CD8-positive, alpha-beta T cell (primary cell): ENCODE measurements at regions of chr3 and their contacts with region 1.

Region 1: GRCh38 chr3:127590593-127591477 is at the start of gene TPRA1:
- DNase-seq: peak; percentile 46 to 94 (median 79)
- ATAC-seq: peak; percentile 86
- H3K4me3 ChIP-seq: peak within 1 kb of the TSS; percentile 75 to 81
- H3K4me3 Mint-ChIP-seq: peak within 1 kb of the TSS; percentile 97
- H3K27ac ChIP-seq: peak within 1 kb of the TSS; percentile 68 to 74
- H3K27ac Mint-ChIP-seq: peak within 1 kb of the TSS; percentile 91
- H3K4me1 ChIP-seq: peaks cover 20% of the 10 kb centered on the region
- H3K4me1 Mint-ChIP-seq: peaks cover 35% of the 10 kb centered on the region
- H3K27me3 ChIP-seq: no peaks in the 10 kb centered on the region
- H3K27me3 Mint-ChIP-seq: no peaks in the 10 kb centered on the region
- CTCF ChIP-seq: no peak
- total RNA-seq, gene TPRA1: 6.0 to 6.1 TPM

Region 2: GRCh38 chr3:126357295-126358037 is 1233.4 kb before region 1 on chr3 and contains the start of gene KLF15:
- CTCF ChIA-PET with region 1: no interaction called
- POLR2A ChIA-PET with region 1: no interaction called
- intact Hi-C with region 1: loop called in 1 of 2 experiments (anchors 10 kb)
- DNase-seq: peak; percentile 46 to 85 (median 71)
- ATAC-seq: peak; percentile 94
- H3K4me3 ChIP-seq: peak within 1 kb of the TSS; percentile 50 to 79
- H3K4me3 Mint-ChIP-seq: peak within 1 kb of the TSS; percentile 90
- H3K27ac ChIP-seq: no peak within 1 kb of the TSS
- H3K27ac Mint-ChIP-seq: peak within 1 kb of the TSS; percentile 77
- H3K4me1 ChIP-seq: peaks cover 14% of the 10 kb centered on the region
- H3K4me1 Mint-ChIP-seq: peaks cover 15% of the 10 kb centered on the region
- H3K27me3 ChIP-seq: peaks cover 13 to 19% of the 10 kb centered on the region in 2 experiments
- H3K27me3 Mint-ChIP-seq: peaks cover 52% of the 10 kb centered on the region
- CTCF ChIP-seq: no peak
- total RNA-seq, gene KLF15: 0.16 TPM in 1 of 2 experiments, not detected in the other

Region 3: DNA sequence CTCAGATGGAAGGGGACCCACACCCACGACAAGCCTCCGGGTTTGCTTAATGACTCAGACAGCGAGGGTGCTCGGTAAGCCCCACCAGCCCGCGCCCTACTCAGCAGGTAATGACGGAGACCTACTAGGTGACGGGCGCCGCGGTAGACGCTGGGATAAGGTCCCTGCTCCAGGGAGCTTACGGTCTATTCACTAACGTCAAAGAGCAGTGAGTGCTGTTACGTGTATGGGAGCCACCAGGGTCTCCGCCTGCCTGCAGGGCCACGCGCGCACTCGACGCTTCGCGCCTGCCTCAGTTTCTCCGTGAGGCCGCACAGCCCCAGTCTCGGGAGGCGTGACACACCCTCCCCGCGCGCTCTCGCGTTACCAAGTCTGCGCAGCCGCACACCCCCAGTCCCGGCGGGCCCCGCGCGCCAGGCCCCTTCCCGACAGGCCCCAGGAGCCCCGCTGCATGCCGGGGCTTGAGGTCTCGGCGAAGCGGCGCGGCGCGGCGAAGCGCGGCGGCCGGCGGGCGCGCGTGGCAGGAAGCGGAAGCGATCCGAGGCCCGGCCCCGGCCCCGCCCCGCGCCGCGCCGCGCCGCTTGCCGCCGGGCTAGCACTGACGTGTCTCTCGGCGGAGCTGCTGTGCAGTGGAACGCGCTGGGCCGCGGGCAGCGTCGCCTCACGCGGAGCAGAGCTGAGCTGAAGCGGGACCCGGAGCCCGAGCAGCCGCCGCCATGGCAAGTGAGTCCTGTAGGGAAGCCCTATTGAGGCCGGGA is 461.2 kb after region 1 on chr3 and contains the start of gene SEC61A1:
- CTCF ChIA-PET with region 1: no interaction called
- POLR2A ChIA-PET with region 1: no interaction called
- intact Hi-C with region 1: loop called (anchors 5 kb)
- DNase-seq: peak; percentile 87 to 97 (median 95)
- ATAC-seq: peak; percentile 93
- H3K4me3 ChIP-seq: peak within 1 kb of the TSS; percentile 92 to 95
- H3K4me3 Mint-ChIP-seq: peak within 1 kb of the TSS; percentile 99
- H3K27ac ChIP-seq: peak within 1 kb of the TSS; percentile 78 to 85
- H3K27ac Mint-ChIP-seq: peak within 1 kb of the TSS; percentile 98
- H3K4me1 ChIP-seq: peaks cover 35% of the 10 kb centered on the region
- H3K4me1 Mint-ChIP-seq: peaks cover 43% of the 10 kb centered on the region
- H3K27me3 ChIP-seq: no peaks in the 10 kb centered on the region
- H3K27me3 Mint-ChIP-seq: no peaks in the 10 kb centered on the region
- CTCF ChIP-seq: no peak
- total RNA-seq, gene SEC61A1: 125 to 131 TPM